ENCODE measurements at regions of chr18 and their contacts with region 1.

Region 1: DNA sequence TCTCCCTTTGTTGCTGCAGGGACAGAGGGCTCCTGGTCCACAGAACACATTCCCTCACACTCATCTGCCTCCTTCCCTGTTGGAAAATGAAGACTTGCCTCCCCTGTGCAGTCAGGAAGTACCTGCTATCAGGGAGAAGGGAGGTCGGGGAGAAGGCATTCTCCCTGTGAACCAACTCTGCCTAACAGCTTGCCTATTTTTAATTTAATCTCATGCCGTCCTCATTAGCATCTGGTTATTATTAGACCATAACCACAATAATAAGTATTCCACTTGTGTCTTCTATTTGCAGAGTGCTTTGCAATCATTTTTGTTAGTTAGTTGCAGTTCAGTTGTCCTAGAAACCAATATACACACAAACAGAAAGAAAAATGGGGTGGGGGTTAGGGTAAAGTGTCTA is 232.6 kb upstream of the SKOR2 start:
- DNase-seq: no peak

Region 2: GRCh38 chr18:47175908-47176575 is 308.0 kb before region 1 on chr18 and contains the start of gene IER3IP1:
- intact Hi-C with region 1: no loop called
- DNase-seq: peak; percentile 98
- total RNA-seq, gene IER3IP1: 11.1 to 13.7 TPM

Region 3: DNA sequence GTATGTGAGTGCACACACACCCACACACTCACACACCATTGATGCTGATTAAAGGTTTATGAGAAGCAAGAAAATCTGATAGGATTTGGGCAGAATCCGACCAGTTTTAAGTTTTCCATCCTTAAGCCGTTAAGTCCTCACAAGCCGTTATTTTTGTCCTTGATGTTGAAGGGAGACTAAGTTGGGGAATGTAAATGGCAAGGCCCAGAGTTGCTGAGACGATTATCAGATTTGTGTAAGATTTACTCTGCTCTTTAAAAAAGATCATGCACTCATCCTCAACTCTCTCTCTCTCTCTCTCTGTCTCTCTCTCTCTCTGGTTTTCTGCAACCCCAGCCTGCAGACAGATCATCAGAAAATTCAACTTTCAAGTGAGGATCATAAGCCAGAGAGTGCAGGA is 207.5 kb after region 1 on chr18:
- intact Hi-C with region 1: loop called in 1 of 2 experiments (anchors 5 kb)
- DNase-seq: no peak